Heart left ventricle (tissue), 16 donors: ENCODE measurements at regions of chr17 and their contacts with region 1.

Region 1: GRCh38 chr17:69358688-69359596 is 32.0 kb upstream of the ABCA5 start:
- DNase-seq: no peak
- ATAC-seq: no peak
- H3K4me3 ChIP-seq: no peak overlapping the region
- H3K27ac ChIP-seq: no peak overlapping the region
- H3K4me1 ChIP-seq: no peaks in the 10 kb centered on the region
- H3K27me3 ChIP-seq: no peaks in the 10 kb centered on the region
- CTCF ChIP-seq: no peak
- POLR2A ChIP-seq: no peak

Region 2: DNA sequence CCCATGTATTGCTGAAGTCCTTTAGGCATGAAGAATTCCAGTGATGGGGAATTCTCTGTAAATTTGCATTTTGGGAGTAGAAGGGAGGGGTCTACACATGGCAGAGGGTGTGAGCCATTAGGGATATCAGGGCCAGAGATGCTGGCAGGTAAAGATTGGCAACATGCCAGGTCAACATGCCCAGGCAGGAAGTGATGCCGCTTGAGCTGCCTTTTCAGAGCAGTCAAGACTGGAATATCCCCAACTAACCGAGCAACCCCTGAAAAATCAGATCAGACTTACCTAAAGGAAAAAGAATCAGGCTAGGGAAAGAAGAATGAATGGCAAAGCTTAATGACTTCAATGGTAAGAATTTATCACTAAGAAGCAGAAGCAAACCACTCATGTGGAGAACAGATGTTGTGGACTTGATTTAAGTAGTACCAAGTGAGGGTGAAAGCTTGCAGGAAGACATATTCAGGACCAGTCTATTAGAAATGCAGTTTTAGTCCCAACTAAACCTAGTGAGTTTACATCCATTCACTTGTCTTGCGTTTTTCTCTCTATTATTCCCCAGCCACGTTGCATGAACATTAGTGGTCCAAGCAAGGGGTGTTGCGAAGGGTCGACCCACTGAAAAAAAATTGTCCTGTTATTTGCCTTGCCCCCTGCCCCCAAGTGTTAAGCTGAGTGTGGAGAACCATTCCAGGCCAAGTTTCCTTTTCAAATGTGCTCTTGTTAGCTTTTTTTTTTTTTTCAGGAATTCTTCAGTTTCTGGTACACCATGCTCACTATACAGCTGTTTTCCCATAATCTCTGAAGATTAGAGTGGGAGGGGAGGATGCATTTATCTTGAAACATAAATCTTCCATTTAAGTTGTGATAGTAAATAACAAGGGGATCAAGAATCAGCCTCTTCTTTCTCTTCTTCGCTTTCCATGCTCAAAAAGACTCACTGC is 509.0 kb before region 1 on chr17:
- intact Hi-C with region 1: no loop called
- DNase-seq: no peak
- ATAC-seq: no peak
- H3K4me3 ChIP-seq: no peak overlapping the region
- H3K27ac ChIP-seq: peak overlapping the region in 5 of 12 donors; percentile 51 to 78 (median 64)
- H3K4me1 ChIP-seq: peaks cover 0 to 31% (median 0%) of the 10 kb centered on the region in 12 donors
- H3K27me3 ChIP-seq: no peaks in the 10 kb centered on the region
- CTCF ChIP-seq: no peak
- POLR2A ChIP-seq: no peak

Region 3: GRCh38 chr17:70775679-70776078 is 1416.7 kb after region 1 on chr17:
- intact Hi-C with region 1: loop called in 1 of 10 experiments (anchors 10 kb)
- DNase-seq: peak in 1 of 5 donors; percentile 35
- ATAC-seq: peak in 1 of 4 donors; percentile 59
- H3K4me3 ChIP-seq: no peak overlapping the region
- H3K27ac ChIP-seq: no peak overlapping the region
- H3K4me1 ChIP-seq: no peaks in the 10 kb centered on the region
- H3K27me3 ChIP-seq: no peaks in the 10 kb centered on the region
- CTCF ChIP-seq: no peak
- POLR2A ChIP-seq: no peak